WTC11 (cell line): ENCODE measurements at regions of chr4 and their contacts with region 1.

Region 1: DNA sequence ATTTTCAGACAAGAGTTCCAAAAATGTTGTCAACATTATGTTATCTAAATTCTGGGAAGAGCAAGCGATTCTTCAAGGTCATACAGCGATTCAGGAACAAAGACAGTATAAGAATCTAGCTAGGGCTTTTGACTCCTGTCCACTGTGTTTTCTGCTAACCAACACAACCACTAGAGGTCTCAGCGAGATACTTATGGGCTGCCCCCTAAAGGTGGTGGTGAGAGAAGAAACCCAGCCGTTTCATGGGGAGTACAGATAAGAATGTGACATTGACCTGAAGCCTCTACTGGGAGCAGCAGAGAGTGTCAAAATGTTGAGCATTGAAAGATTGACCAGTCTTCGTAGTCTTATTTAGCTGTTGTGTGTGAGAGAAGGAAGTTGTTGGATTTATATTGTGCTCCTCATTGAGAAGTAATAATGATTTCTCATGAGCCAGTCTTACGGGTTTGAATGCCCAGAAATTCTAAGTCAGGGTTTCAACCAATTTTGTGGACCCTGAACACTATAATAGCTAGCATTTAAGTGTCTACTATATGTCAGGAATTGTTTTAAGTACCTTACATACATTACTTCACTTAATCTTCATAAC is 168.3 kb downstream of the SPRY1 start:
- DNase-seq: peak; percentile 63
- ATAC-seq: peak; percentile 99
- H3K4me3 Mint-ChIP-seq: no peak overlapping the region
- H3K27ac Mint-ChIP-seq: no peak overlapping the region
- H3K4me1 Mint-ChIP-seq: peaks cover 22% of the 10 kb centered on the region
- H3K27me3 Mint-ChIP-seq: no peaks in the 10 kb centered on the region; the same call in 1 of the 2 replicates
- CTCF ChIP-seq: peak; percentile 55; the same call in 1 of the 2 replicates

Region 2: DNA sequence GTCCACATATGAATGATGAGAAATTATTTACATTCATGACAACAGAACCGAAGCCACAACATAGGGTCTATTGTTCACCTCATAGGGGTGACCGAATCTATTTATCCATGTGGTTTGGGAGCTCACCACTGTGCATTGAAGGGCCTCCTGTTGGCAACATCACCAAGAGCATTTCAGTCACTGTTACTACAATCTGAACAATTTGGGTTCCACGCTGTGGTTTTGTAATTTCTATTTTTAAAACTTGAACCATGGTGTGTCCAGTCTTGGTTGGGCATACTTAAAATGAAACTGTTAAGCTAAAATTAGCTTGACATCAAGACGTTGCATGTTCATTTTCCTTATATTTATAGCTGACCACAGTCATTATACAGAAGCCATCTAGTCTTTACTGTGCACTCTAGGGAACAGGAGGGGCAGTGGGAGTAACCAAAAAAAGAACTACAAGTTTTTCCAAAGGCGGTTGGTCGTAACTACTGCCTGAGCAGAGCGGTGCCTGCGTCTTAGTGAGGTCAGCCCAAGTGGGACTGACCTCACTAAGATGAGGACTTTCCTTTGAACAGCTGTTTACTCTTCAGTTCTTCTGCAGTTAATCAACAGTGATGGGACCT is 23.9 kb after region 1 on chr4:
- CTCF ChIA-PET with region 1: interaction called, 10 read pairs
- POLR2A ChIA-PET with region 1: no interaction called
- DNase-seq: no peak
- ATAC-seq: no peak
- H3K4me3 Mint-ChIP-seq: no peak overlapping the region
- H3K27ac Mint-ChIP-seq: no peak overlapping the region
- H3K4me1 Mint-ChIP-seq: peaks cover 20% of the 10 kb centered on the region
- H3K27me3 Mint-ChIP-seq: no peaks in the 10 kb centered on the region
- CTCF ChIP-seq: no peak

Region 3: GRCh38 chr4:123649645-123650391 is 85.0 kb after region 1 on chr4:
- CTCF ChIA-PET with region 1: interaction called, 10 read pairs
- POLR2A ChIA-PET with region 1: no interaction called
- DNase-seq: peak; percentile 24
- ATAC-seq: peak; percentile 93
- H3K4me3 Mint-ChIP-seq: no peak overlapping the region
- H3K27ac Mint-ChIP-seq: peak overlapping the region; percentile 52
- H3K4me1 Mint-ChIP-seq: peaks cover 20% of the 10 kb centered on the region
- H3K27me3 Mint-ChIP-seq: no peaks in the 10 kb centered on the region
- CTCF ChIP-seq: no peak